ENCODE measurements at regions of chr3 and their contacts with region 1.

Region 1: GRCh38 chr3:53682807-53683206 is 163.4 kb downstream of the CHDH start:
- DNase-seq: no peak
- ATAC-seq: no peak
- H3K4me3 ChIP-seq: no peak overlapping the region
- H3K27ac ChIP-seq: no peak overlapping the region
- H3K4me1 ChIP-seq: no peaks in the 10 kb centered on the region
- H3K27me3 ChIP-seq: no peaks in the 10 kb centered on the region
- CTCF ChIP-seq: no peak
- EP300 ChIP-seq: no peak
- POLR2A ChIP-seq: no peak
- RAD21 ChIP-seq: no peak

Region 2: GRCh38 chr3:53650424-53650823 is 32.4 kb before region 1 on chr3:
- CTCF ChIA-PET with region 1: no interaction called
- POLR2A ChIA-PET with region 1: interaction called, 12 read pairs
- RAD21 ChIA-PET with region 1: interaction called, 3 read pairs
- SMC1A ChIA-PET with region 1: interaction called, 3 read pairs
- in situ Hi-C with region 1: no loop called
- intact Hi-C with region 1: no loop called
- DNase-seq: peak; percentile 75
- ATAC-seq: peak; percentile 83
- H3K4me3 ChIP-seq: no peak overlapping the region; the same call in 1 of the 2 replicates
- H3K27ac ChIP-seq: no peak overlapping the region
- H3K4me1 ChIP-seq: peaks cover 12% of the 10 kb centered on the region
- H3K27me3 ChIP-seq: no peaks in the 10 kb centered on the region
- CTCF ChIP-seq: no peak
- EP300 ChIP-seq: peak; percentile 50 to 77; a peak in 3 of 4 replicates
- POLR2A ChIP-seq: no peak
- RAD21 ChIP-seq: no peak

Measured in GM12878 (cell line).